ENCODE measurements at regions of chr2 and their contacts with region 1.

Region 1: DNA sequence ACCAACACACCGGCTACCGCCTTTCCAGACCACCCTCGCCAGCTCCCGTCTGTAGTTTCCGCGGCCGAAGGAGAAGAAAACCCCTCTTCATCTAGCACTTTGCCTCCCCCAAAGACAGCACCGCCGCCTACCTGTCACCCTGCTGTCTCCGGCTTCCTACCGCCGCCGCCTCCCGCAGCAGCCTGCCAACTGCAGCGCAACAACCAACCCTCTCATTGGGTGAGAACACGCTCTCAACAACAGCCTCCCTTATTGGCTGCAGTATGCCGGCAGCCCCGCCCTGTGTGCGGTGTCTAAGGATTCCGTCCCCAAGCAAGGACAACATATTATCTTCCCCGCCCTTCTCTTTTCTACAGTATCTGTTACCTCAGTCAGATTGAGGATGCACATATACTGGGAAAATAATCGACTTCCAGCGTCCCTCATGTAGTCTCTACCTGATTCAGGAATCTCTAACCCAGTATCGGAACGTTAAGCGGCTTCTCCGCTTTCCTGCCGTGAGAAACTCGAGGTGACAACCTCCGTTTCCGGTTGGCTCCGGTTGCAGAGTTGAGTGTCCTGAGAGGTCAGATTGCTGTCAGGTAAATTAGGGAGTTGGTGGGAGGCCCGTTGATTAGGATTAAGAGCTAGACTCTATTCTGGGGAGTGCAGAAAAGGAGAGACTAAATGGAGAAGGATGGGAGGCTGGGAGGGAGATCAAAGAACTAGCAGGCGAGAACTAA is at the starts of genes HYCC2 and NDUFB3:
- DNase-seq: peak; percentile 96 to 97
- ATAC-seq: peak; percentile 100
- H3K4me3 ChIP-seq: peak within 1 kb of the TSS; percentile 61
- H3K27ac ChIP-seq: peak within 1 kb of the TSS; percentile 91 to 96
- H3K4me1 ChIP-seq: peaks cover 28% of the 10 kb centered on the region; the same call in 2 of the 3 replicates
- CTCF ChIP-seq: peak; percentile 11; the same call in 1 of the 3 replicates
- EP300 ChIP-seq: no peak
- POLR2A ChIP-seq: peak; percentile 53
- RAD21 ChIP-seq: no peak; a peak in 1 of 5 replicates
- polyA plus RNA-seq, gene HYCC2: 5.8 and 7.3 TPM in 2 replicates
- polyA plus RNA-seq, gene NDUFB3: 103 and 162 TPM in 2 replicates

Region 2: GRCh38 chr2:200901459-200902072 is 170.1 kb before region 1 on chr2:
- CTCF ChIA-PET with region 1: interaction called, 150 read pairs
- POLR2A ChIA-PET with region 1: interaction called, 8 read pairs
- DNase-seq: peak; percentile 90 to 94
- ATAC-seq: peak; percentile 95 to 98
- H3K4me3 ChIP-seq: no peak overlapping the region
- H3K27ac ChIP-seq: no peak overlapping the region
- H3K4me1 ChIP-seq: peaks cover 12% of the 10 kb centered on the region; the same call in 1 of the 3 replicates
- CTCF ChIP-seq: peak; percentile 87
- EP300 ChIP-seq: no peak
- POLR2A ChIP-seq: no peak
- RAD21 ChIP-seq: peak; percentile 85 to 88

Region 3: GRCh38 chr2:201084863-201085262 is 13.2 kb after region 1 on chr2:
- CTCF ChIA-PET with region 1: interaction called, 10 read pairs
- POLR2A ChIA-PET with region 1: interaction called, 6 read pairs
- DNase-seq: no peak
- ATAC-seq: no peak
- H3K4me3 ChIP-seq: no peak overlapping the region
- H3K27ac ChIP-seq: no peak overlapping the region
- H3K4me1 ChIP-seq: no peaks in the 10 kb centered on the region
- CTCF ChIP-seq: no peak
- EP300 ChIP-seq: no peak
- POLR2A ChIP-seq: no peak
- RAD21 ChIP-seq: no peak

Region 4: GRCh38 chr2:201176081-201176481 is 104.4 kb after region 1 on chr2:
- CTCF ChIA-PET with region 1: interaction called, 17 read pairs
- POLR2A ChIA-PET with region 1: no interaction called
- DNase-seq: no peak
- ATAC-seq: no peak
- H3K4me3 ChIP-seq: no peak overlapping the region
- H3K27ac ChIP-seq: peak overlapping the region in 1 of 2 experiments; percentile 60; a peak in 1 of 6 replicates
- H3K4me1 ChIP-seq: 0 out of 3 replicates have a peak, but pooled peaks cover 4% of the 10 kb centered on the region
- CTCF ChIP-seq: no peak
- EP300 ChIP-seq: no peak
- POLR2A ChIP-seq: no peak
- RAD21 ChIP-seq: no peak

Region 5: GRCh38 chr2:201182650-201183364 is 111.2 kb after region 1 on chr2 and contains the start of gene CASP10:
- CTCF ChIA-PET with region 1: interaction called, 17 read pairs
- POLR2A ChIA-PET with region 1: no interaction called
- DNase-seq: peak; percentile 84 to 89
- ATAC-seq: peak; percentile 95 to 97
- H3K4me3 ChIP-seq: peak within 1 kb of the TSS; percentile 52
- H3K27ac ChIP-seq: peak within 1 kb of the TSS; percentile 73 to 85
- H3K4me1 ChIP-seq: peaks cover 11% of the 10 kb centered on the region; the same call in 2 of the 3 replicates
- CTCF ChIP-seq: peak; percentile 71
- EP300 ChIP-seq: no peak
- POLR2A ChIP-seq: no peak
- RAD21 ChIP-seq: peak; percentile 68 to 77
- polyA plus RNA-seq, gene CASP10: 6.5 and 6.8 TPM in 2 replicates

Measured in A549 (cell line).